ENCODE measurements at regions of chr13 and their contacts with region 1.

Region 1: GRCh38 chr13:44230736-44231135 is 142.9 kb upstream of the SERP2 start:
- DNase-seq: no peak
- H3K4me3 ChIP-seq: no peak overlapping the region
- H3K4me3 Mint-ChIP-seq: no peak overlapping the region
- H3K27ac Mint-ChIP-seq: no peak overlapping the region
- H3K4me1 ChIP-seq: peaks cover 45% of the 10 kb centered on the region
- H3K4me1 Mint-ChIP-seq: peaks cover 7% of the 10 kb centered on the region
- H3K27me3 ChIP-seq: no peaks in the 10 kb centered on the region
- H3K27me3 Mint-ChIP-seq: no peaks in the 10 kb centered on the region
- CTCF ChIP-seq: no peak

Region 2: DNA sequence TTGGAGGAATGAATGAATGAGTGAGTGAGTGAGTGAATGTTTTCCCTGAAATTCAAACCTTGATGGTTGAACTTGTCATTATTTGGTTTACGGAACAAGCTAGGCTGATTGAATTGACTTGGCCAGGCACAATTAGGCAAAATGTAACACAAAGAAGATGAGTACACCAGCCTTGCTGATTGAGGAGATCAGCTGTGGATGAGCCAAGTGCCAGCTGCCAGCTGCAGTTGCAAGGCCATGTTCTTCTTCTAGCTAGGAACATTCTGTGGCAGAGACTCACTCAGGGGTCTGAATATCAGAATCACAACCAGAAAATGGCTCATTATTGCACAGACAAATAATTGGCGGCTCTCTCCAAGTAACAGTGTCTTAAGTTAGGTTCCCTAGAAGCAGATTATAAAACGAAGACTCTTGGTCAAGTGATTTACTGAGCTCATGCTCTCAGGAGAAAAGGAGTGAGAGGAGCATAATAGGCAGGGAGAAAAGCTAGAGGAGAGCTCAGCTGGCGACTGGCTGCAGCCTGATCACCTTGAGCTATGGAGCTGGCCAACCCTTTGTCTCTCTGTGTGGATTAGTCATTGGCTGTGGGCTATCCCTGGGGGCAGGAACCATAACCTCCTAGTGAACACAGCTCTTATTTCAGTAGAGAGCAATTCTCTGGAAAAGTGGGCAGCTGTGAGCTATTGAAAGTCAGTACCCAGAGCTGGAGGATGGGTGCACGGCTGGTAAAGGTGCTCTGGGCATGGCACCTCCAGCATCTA is 82.4 kb before region 1 on chr13:
- CTCF ChIA-PET with region 1: no interaction called
- POLR2A ChIA-PET with region 1: no interaction called
- intact Hi-C with region 1: loop called (anchors 2 kb)
- DNase-seq: no peak
- H3K4me3 ChIP-seq: no peak overlapping the region
- H3K4me3 Mint-ChIP-seq: no peak overlapping the region
- H3K27ac Mint-ChIP-seq: no peak overlapping the region
- H3K4me1 ChIP-seq: peaks cover 20% of the 10 kb centered on the region
- H3K4me1 Mint-ChIP-seq: peaks cover 29% of the 10 kb centered on the region
- H3K27me3 ChIP-seq: no peaks in the 10 kb centered on the region
- H3K27me3 Mint-ChIP-seq: no peaks in the 10 kb centered on the region
- CTCF ChIP-seq: no peak

Region 3: GRCh38 chr13:44212633-44213403 is 17.9 kb before region 1 on chr13:
- CTCF ChIA-PET with region 1: interaction called, 3 read pairs
- POLR2A ChIA-PET with region 1: interaction called, 6 read pairs
- intact Hi-C with region 1: loop called (anchors 1 kb)
- DNase-seq: peak; percentile 85 to 90
- H3K4me3 ChIP-seq: no peak overlapping the region
- H3K4me3 Mint-ChIP-seq: peak overlapping the region; percentile 47
- H3K27ac Mint-ChIP-seq: peak overlapping the region; percentile 97
- H3K4me1 ChIP-seq: peaks cover 18% of the 10 kb centered on the region
- H3K4me1 Mint-ChIP-seq: peaks cover 36% of the 10 kb centered on the region
- H3K27me3 ChIP-seq: no peaks in the 10 kb centered on the region
- H3K27me3 Mint-ChIP-seq: no peaks in the 10 kb centered on the region
- CTCF ChIP-seq: no peak

Region 4: DNA sequence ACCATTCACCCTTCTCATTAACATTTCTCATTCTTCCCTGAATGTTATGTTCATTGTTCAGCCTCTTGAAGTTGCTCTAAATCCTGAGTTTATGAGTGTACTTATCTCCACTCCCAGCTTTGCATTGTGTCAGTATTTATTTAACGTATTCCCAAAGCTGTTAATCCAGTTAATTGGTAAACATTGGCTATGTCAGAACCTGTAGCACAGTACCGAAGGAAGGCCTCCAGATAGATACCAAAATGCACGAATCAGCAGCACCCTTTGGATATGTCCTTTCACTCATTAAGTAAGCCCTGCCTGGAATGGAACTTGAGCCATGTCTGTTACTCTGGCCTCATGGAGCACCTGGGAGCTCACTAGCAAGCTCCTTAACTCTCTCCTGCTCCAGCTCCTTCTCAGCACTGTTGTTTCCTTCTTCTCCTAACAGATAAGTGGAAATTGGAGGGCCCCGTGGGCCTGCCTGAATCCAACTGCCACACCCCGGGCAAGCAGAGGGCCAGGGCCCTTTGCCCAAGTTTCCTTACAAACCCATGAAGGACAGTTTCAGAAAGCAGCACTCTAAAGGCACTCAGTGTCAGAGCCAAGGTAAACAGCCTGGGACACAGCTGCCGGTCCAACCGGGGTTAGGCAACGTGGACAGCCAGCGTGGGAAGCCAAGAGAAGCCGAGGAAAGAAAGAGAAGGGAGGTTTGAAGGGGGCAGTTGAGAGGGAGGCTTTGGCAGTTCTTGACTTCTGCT is 12.1 kb before region 1 on chr13:
- CTCF ChIA-PET with region 1: interaction called, 5 read pairs
- POLR2A ChIA-PET with region 1: interaction called, 6 read pairs
- intact Hi-C with region 1: loop called (anchors 1 kb)
- DNase-seq: peak; percentile 60 to 63
- H3K4me3 ChIP-seq: no peak overlapping the region
- H3K4me3 Mint-ChIP-seq: no peak overlapping the region
- H3K27ac Mint-ChIP-seq: peak overlapping the region; percentile 80
- H3K4me1 ChIP-seq: peaks cover 24% of the 10 kb centered on the region
- H3K4me1 Mint-ChIP-seq: peaks cover 34% of the 10 kb centered on the region
- H3K27me3 ChIP-seq: no peaks in the 10 kb centered on the region
- H3K27me3 Mint-ChIP-seq: no peaks in the 10 kb centered on the region
- CTCF ChIP-seq: no peak

Region 5: DNA sequence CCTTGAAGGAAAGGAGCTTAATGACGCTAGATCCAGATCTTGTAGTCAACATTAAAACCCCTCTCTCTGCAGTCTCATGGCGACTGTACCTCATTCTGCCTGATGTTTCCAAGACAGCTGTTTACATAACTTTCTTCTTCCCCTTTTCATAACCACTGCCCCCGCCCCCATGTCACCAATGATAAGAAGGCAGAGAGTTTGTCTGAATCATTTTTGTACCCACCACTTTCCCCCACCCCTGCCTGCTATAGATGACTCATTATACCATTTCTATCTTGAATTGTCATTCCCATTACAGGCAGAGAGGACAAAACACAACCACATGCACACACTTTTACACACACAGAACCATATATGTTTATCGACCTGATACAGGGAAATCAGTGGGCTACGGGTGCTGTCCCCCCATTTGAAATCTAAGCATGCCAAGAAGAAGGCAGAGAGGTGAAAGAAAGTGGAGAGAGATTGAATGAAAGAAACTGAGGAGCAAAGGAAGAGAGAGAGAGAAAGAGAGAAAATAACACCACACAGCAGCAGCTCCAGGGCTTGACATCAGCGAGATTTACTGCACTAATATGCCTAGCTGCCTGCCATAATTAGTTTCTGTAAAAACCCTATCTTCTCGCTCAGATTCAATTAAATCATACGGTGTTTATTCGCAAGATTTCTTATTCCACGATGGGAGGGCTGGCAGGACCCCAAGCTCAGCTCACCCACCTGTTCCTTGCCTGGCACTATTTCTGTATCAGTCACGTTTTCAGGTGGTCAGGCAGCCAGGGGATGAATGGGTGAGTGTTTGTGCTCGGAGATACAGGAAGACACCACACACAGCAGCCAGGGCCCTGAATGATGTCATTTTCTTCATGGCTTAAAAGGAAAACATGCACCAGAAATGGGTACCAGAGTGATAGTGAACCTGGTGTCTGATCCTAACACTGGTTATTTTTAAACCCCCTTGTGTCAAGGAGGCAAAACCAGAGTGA is 28.6 kb after region 1 on chr13:
- CTCF ChIA-PET with region 1: no interaction called
- POLR2A ChIA-PET with region 1: no interaction called
- intact Hi-C with region 1: no loop called
- DNase-seq: no peak
- H3K4me3 ChIP-seq: no peak overlapping the region
- H3K4me3 Mint-ChIP-seq: no peak overlapping the region
- H3K27ac Mint-ChIP-seq: no peak overlapping the region
- H3K4me1 ChIP-seq: no peaks in the 10 kb centered on the region
- H3K4me1 Mint-ChIP-seq: no peaks in the 10 kb centered on the region
- H3K27me3 ChIP-seq: no peaks in the 10 kb centered on the region
- H3K27me3 Mint-ChIP-seq: no peaks in the 10 kb centered on the region
- CTCF ChIP-seq: no peak

Region 6: DNA sequence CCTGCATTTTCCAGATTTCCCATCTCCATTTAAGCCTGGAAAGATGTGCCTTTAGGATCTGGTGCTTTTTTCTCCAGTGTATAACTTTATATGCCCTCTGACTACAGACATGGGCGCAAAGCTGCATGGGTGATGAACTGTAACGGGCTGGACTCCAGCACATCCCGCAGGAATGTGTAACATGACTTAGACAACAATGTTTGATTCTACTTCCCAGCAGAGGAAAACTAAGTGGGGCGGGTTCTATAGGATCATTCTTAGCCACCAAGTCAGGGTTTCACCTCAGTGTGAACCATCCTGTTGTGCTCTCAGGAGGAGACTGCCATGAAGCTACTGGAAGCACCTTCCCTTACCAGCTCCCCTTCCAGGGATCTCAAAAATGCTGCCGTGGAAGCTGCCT is 49.7 kb after region 1 on chr13:
- CTCF ChIA-PET with region 1: no interaction called
- POLR2A ChIA-PET with region 1: no interaction called
- intact Hi-C with region 1: loop called (anchors 1 kb)
- DNase-seq: no peak
- H3K4me3 ChIP-seq: no peak overlapping the region
- H3K4me3 Mint-ChIP-seq: no peak overlapping the region
- H3K27ac Mint-ChIP-seq: peak overlapping the region; percentile 86
- H3K4me1 ChIP-seq: peaks cover 52% of the 10 kb centered on the region
- H3K4me1 Mint-ChIP-seq: peaks cover 39% of the 10 kb centered on the region
- H3K27me3 ChIP-seq: no peaks in the 10 kb centered on the region
- H3K27me3 Mint-ChIP-seq: no peaks in the 10 kb centered on the region
- CTCF ChIP-seq: no peak

Region 7: GRCh38 chr13:44355643-44356042 is 124.9 kb after region 1 on chr13:
- CTCF ChIA-PET with region 1: no interaction called
- POLR2A ChIA-PET with region 1: interaction called, 3 read pairs
- intact Hi-C with region 1: loop called (anchors 1 kb)
- DNase-seq: no peak
- H3K4me3 ChIP-seq: no peak overlapping the region
- H3K4me3 Mint-ChIP-seq: no peak overlapping the region
- H3K27ac Mint-ChIP-seq: peak overlapping the region; percentile 30
- H3K4me1 ChIP-seq: peaks cover 74% of the 10 kb centered on the region
- H3K4me1 Mint-ChIP-seq: peaks cover 36% of the 10 kb centered on the region
- H3K27me3 ChIP-seq: no peaks in the 10 kb centered on the region
- H3K27me3 Mint-ChIP-seq: no peaks in the 10 kb centered on the region
- CTCF ChIP-seq: no peak

Region 8: GRCh38 chr13:44364348-44365049 is 133.8 kb after region 1 on chr13:
- CTCF ChIA-PET with region 1: no interaction called
- POLR2A ChIA-PET with region 1: no interaction called
- intact Hi-C with region 1: loop called (anchors 1 kb)
- DNase-seq: peak; percentile 80 to 89
- H3K4me3 ChIP-seq: no peak overlapping the region
- H3K4me3 Mint-ChIP-seq: peak overlapping the region; percentile 5
- H3K27ac Mint-ChIP-seq: peak overlapping the region; percentile 81
- H3K4me1 ChIP-seq: peaks cover 83% of the 10 kb centered on the region
- H3K4me1 Mint-ChIP-seq: peaks cover 47% of the 10 kb centered on the region
- H3K27me3 ChIP-seq: no peaks in the 10 kb centered on the region
- H3K27me3 Mint-ChIP-seq: no peaks in the 10 kb centered on the region
- CTCF ChIP-seq: no peak